Right ventricle myocardium inferior (tissue), 1 donor: ENCODE measurements at regions of chr1 and their contacts with region 1.

Region 1: GRCh38 chr1:182291584-182292192 is 99.9 kb downstream of the GLUL start:
- DNase-seq: no peak
- ATAC-seq: peak; percentile 49

Region 2: GRCh38 chr1:182159443-182159842 is 132.2 kb before region 1 on chr1:
- intact Hi-C with region 1: loop called (anchors 5 kb)
- DNase-seq: no peak
- ATAC-seq: no peak

Region 3: DNA sequence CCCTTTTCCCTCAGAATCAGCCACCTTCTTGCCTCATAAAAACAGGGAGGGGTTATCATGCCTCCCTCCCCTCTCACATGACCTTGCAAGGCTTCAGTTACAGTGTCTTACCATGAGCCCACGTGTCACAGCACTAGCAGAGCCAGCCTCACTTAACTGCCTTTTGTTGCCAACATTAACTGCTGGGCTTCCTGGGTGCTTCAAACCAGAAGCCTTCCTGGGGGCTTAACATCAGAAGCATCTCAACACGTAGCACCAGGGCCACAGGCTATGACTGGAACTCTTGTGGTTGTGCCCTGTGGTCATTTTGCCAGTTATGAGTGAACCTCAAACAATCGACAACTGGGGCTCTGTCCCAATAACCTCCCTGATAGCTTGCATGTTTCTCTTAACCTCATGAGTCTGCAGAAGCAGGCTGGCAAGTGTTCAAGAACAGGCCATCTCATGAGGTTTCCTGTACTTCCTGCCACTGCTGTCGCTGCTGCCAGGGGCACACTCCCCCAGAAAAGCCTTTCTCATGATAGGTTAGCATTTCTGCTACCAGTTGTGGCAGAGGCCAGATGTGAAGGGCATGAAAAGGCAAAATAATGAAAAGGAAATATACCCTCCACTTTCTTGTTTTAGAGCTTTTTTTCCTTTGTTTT is 32.3 kb before region 1 on chr1:
- intact Hi-C with region 1: loop called (anchors 2 kb)
- DNase-seq: peak; percentile 69
- ATAC-seq: peak; percentile 63

Region 4: DNA sequence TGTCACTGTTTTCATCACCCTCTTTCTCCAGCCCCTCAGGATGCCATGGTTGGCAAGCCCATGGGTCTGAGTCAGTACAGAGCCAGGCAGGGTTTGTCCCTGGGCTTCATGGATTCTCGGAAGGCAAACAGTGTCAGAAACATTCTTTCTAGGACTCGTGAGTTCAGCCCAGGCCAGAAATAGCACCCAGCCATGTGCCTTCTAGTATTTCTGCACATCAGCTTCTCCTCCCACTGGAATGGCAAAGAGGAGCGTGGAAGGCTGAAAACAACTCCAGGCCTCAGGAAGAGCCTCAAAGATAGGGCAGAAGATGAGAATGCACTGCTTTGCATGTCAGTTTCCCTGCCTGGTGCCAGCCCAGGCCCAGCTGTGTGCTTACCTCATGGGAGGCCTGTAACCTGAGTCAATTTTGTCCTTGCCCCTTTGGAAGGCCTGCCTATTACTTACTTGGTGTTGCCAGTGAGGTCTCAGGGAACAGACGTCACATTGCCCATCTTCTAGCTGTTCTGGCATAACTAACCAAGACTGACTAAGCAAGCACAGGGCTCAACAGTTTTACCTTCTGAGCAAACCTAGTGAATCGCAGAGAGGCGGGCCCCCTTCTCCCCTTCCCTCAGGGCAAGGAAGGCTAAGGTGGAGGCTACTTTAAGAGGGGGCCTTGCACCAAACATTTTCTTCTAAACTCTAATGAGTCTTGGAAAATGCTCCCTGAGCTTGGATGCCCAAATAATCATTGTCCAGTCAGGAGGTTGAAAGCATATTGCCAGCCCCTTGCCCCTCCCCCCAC is 57.5 kb after region 1 on chr1:
- intact Hi-C with region 1: loop called (anchors 5 kb)
- DNase-seq: no peak
- ATAC-seq: peak; percentile 80

Region 5: GRCh38 chr1:182404781-182405180 is 113.1 kb after region 1 on chr1:
- intact Hi-C with region 1: no loop called
- DNase-seq: no peak
- ATAC-seq: no peak